ENCODE measurements at regions of chr14 and their contacts with region 1.

Region 1: GRCh38 chr14:22168092-22168955 is 420.7 kb downstream of the DAD1 start:
- DNase-seq: peak in 3 of 9 experiments; percentile 23 to 58 (median 24)
- ATAC-seq: peak; percentile 74
- H3K4me3 ChIP-seq: peak overlapping the region; percentile 38 to 39
- H3K4me3 Mint-ChIP-seq: peak overlapping the region; percentile 85
- H3K27ac ChIP-seq: peak overlapping the region; percentile 35 to 43
- H3K27ac Mint-ChIP-seq: peak overlapping the region; percentile 92
- H3K4me1 ChIP-seq: no peaks in the 10 kb centered on the region
- H3K4me1 Mint-ChIP-seq: no peaks in the 10 kb centered on the region
- H3K27me3 ChIP-seq: no peaks in the 10 kb centered on the region
- H3K27me3 Mint-ChIP-seq: no peaks in the 10 kb centered on the region
- CTCF ChIP-seq: no peak

Region 2: GRCh38 chr14:22131749-22132476 is 36.4 kb before region 1 on chr14:
- CTCF ChIA-PET with region 1: no interaction called
- POLR2A ChIA-PET with region 1: no interaction called
- intact Hi-C with region 1: no loop called
- DNase-seq: peak in 5 of 9 experiments; percentile 17 to 49 (median 21)
- ATAC-seq: peak; percentile 49
- H3K4me3 ChIP-seq: no peak overlapping the region
- H3K4me3 Mint-ChIP-seq: no peak overlapping the region
- H3K27ac ChIP-seq: no peak overlapping the region
- H3K27ac Mint-ChIP-seq: no peak overlapping the region
- H3K4me1 ChIP-seq: no peaks in the 10 kb centered on the region
- H3K4me1 Mint-ChIP-seq: peaks cover 4% of the 10 kb centered on the region
- H3K27me3 ChIP-seq: peaks cover 0 to 3% of the 10 kb centered on the region in 2 experiments
- H3K27me3 Mint-ChIP-seq: no peaks in the 10 kb centered on the region
- CTCF ChIP-seq: peak; percentile 22

Region 3: GRCh38 chr14:22185191-22185590 is 16.9 kb after region 1 on chr14:
- CTCF ChIA-PET with region 1: no interaction called
- POLR2A ChIA-PET with region 1: no interaction called
- intact Hi-C with region 1: no loop called
- DNase-seq: no peak
- ATAC-seq: no peak
- H3K4me3 ChIP-seq: no peak overlapping the region
- H3K4me3 Mint-ChIP-seq: no peak overlapping the region
- H3K27ac ChIP-seq: no peak overlapping the region
- H3K27ac Mint-ChIP-seq: no peak overlapping the region
- H3K4me1 ChIP-seq: no peaks in the 10 kb centered on the region
- H3K4me1 Mint-ChIP-seq: peaks cover 3% of the 10 kb centered on the region
- H3K27me3 ChIP-seq: no peaks in the 10 kb centered on the region
- H3K27me3 Mint-ChIP-seq: peaks cover 2% of the 10 kb centered on the region
- CTCF ChIP-seq: no peak

Region 4: DNA sequence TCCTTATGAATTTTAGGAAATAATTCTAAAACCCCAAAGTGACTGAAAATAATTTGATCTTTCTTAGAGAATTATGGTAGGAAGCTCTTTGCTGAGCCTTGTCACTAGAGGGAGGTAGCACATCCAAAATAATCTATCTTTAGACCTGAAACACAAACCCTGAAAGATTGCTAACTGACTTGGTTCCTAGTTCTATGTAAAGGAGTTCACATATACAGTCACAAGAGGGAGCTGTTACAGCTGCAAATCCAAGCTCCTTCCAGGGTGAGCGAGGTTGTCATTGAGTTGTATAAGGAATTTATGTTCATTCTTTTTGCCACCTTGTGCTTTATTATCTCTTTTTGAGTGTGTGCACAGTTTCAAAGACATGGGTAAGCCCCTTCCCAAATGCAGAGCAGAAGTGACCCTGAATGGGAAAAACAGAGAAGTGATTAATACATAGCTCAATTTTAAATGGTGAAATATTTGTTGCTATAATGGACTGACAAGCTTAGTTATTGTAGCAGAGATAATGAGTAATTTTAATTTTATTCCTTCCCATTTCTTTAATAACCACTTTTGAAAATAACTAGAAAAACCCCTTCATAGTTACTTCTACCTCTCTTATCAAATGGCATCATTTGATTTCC is 32.8 kb after region 1 on chr14:
- CTCF ChIA-PET with region 1: interaction called, 4 read pairs
- POLR2A ChIA-PET with region 1: no interaction called
- intact Hi-C with region 1: loop called in 1 of 2 experiments (anchors 1 kb)
- DNase-seq: peak in 2 of 9 experiments; percentile 44 to 70
- ATAC-seq: peak; percentile 71
- H3K4me3 ChIP-seq: no peak overlapping the region
- H3K4me3 Mint-ChIP-seq: no peak overlapping the region
- H3K27ac ChIP-seq: no peak overlapping the region
- H3K27ac Mint-ChIP-seq: no peak overlapping the region
- H3K4me1 ChIP-seq: no peaks in the 10 kb centered on the region
- H3K4me1 Mint-ChIP-seq: peaks cover 10% of the 10 kb centered on the region
- H3K27me3 ChIP-seq: no peaks in the 10 kb centered on the region
- H3K27me3 Mint-ChIP-seq: no peaks in the 10 kb centered on the region
- CTCF ChIP-seq: no peak